ENCODE measurements at regions of chr17 and their contacts with region 1.

Region 1: DNA sequence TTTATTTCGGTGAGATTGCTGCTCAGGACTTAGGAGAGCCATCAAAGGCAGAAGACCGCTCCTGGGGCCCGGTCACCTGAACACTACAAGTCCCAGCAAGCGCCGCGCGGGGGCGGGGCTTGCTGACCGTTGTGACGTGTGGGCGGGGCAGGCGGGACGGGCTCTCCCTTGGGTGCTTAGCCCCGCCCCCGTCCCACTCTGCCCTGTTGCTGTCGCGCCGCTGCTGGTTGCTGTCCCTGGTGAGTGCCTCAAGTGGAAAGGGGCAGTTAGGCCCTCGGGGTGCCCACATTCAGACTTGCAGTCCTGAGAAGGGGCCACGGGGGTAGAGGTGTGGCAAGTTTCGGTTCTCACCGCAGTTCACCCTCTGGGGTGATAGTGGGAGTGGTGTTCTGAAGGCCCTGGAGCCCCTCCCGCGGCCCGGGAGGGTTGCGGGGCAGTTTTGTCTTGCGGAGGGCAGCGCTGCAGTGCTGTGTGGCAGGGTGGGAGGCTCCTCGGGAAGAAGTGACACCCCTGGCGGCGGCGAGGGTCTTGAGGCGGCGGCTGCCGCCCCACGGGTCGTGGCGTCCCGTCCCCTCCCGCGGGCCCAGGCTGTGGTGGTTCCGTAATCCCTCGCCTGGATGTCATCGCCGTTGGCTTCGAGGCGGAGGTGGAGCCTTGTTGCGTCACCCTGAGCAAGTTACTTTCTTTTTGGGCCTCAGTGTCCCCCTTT is at the start of gene CALCOCO2:
- DNase-seq: peak; percentile 82
- ATAC-seq: peak; percentile 96
- H3K4me3 Mint-ChIP-seq: peak within 1 kb of the TSS; percentile 99
- H3K27ac Mint-ChIP-seq: peak within 1 kb of the TSS; percentile 99
- H3K4me1 Mint-ChIP-seq: peaks cover 42% of the 10 kb centered on the region
- H3K27me3 Mint-ChIP-seq: no peaks in the 10 kb centered on the region
- CTCF ChIP-seq: no peak
- total RNA-seq, gene CALCOCO2: 115 TPM in 2 replicates

Region 2: GRCh38 chr17:48841395-48841831 is 10.4 kb after region 1 on chr17:
- CTCF ChIA-PET with region 1: no interaction called
- POLR2A ChIA-PET with region 1: interaction called, 14 read pairs
- intact Hi-C with region 1: loop called (anchors 1 kb)
- DNase-seq: no peak
- ATAC-seq: peak; percentile 97
- H3K4me3 Mint-ChIP-seq: peak overlapping the region; percentile 82
- H3K27ac Mint-ChIP-seq: peak overlapping the region; percentile 93
- H3K4me1 Mint-ChIP-seq: peaks cover 57% of the 10 kb centered on the region
- H3K27me3 Mint-ChIP-seq: no peaks in the 10 kb centered on the region
- CTCF ChIP-seq: no peak

Region 3: DNA sequence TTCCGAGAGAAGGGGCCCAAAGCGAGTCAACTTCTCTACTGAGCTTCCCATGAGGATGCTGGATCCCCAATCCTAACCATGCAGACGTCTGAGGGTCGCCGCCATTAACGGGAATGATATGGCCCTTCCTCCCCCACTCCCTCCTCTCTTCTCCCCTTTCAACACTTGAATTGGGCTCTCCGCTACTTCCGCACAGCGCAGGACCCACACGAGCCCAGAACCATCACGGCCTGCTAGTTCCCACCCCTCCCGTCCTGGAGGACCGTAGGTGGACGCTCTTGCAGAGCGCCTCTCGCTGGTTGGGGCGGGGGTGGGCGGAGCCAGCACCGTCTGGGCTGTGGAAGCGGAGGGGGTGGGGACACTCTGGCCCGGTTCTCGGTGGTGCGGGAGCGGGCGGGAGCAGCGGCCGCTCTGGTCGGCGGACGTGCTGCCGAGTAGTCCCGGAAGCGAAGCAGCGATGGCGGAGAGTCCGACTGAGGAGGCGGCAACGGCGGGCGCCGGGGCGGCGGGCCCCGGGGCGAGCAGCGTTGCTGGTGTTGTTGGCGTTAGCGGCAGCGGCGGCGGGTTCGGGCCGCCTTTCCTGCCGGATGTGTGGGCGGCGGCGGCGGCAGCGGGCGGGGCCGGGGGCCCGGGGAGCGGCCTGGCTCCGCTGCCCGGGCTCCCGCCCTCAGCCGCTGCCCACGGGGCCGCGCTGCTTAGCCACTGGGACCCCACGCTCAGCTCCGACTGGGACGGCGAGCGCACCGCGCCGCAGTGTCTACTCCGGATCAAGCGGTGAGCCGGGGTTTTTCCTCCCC is 77.3 kb after region 1 on chr17 and contains the start of gene UBE2Z:
- CTCF ChIA-PET with region 1: no interaction called
- POLR2A ChIA-PET with region 1: no interaction called
- intact Hi-C with region 1: no loop called
- DNase-seq: peak; percentile 83
- ATAC-seq: peak; percentile 84
- H3K4me3 Mint-ChIP-seq: peak within 1 kb of the TSS; percentile 96
- H3K27ac Mint-ChIP-seq: peak within 1 kb of the TSS; percentile 99
- H3K4me1 Mint-ChIP-seq: peaks cover 51% of the 10 kb centered on the region
- H3K27me3 Mint-ChIP-seq: no peaks in the 10 kb centered on the region
- CTCF ChIP-seq: no peak
- total RNA-seq, gene UBE2Z: 121 and 154 TPM in 2 replicates